Caco-2 (cell line): ENCODE measurements at regions of chr7 and their contacts with region 1.

Region 1: GRCh38 chr7:88344956-88345832 is 38.5 kb upstream of the STEAP4 start:
- DNase-seq: peak; percentile 57 to 68
- H3K4me3 ChIP-seq: no peak overlapping the region
- H3K4me3 Mint-ChIP-seq: no peak overlapping the region
- H3K27ac Mint-ChIP-seq: no peak overlapping the region
- H3K4me1 ChIP-seq: no peaks in the 10 kb centered on the region
- H3K4me1 Mint-ChIP-seq: no peaks in the 10 kb centered on the region
- H3K27me3 ChIP-seq: no peaks in the 10 kb centered on the region
- H3K27me3 Mint-ChIP-seq: peaks cover 4% of the 10 kb centered on the region
- CTCF ChIP-seq: peak; percentile 71 to 91

Region 2: DNA sequence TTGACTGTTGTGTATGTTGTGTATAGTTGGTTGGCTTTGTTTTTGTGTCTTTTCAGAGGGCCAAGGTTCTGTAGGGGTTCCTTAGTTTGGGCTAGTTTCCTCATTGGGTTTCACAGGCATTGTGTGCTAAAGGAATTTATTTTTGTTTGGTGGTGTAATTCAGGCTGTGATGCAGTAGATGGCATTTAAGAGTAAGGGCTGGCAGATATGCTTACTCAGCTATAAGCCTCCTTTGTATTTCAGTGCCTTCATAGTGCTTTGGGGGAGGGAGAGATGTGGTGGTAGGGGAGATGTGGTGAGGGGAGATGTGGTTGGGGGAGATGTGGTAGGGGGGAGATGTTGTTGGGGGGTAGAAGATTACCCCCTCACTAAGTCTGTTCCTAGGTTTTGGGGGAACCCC is 560.8 kb before region 1 on chr7:
- CTCF ChIA-PET with region 1: no interaction called
- POLR2A ChIA-PET with region 1: no interaction called
- intact Hi-C with region 1: loop called (anchors 10 kb)
- DNase-seq: no peak
- H3K4me3 ChIP-seq: no peak overlapping the region
- H3K4me3 Mint-ChIP-seq: no peak overlapping the region
- H3K27ac Mint-ChIP-seq: no peak overlapping the region
- H3K4me1 ChIP-seq: no peaks in the 10 kb centered on the region
- H3K4me1 Mint-ChIP-seq: no peaks in the 10 kb centered on the region
- H3K27me3 ChIP-seq: peaks cover 3% of the 10 kb centered on the region; the same call in 1 of the 2 replicates
- H3K27me3 Mint-ChIP-seq: peaks cover 15% of the 10 kb centered on the region
- CTCF ChIP-seq: no peak

Region 3: DNA sequence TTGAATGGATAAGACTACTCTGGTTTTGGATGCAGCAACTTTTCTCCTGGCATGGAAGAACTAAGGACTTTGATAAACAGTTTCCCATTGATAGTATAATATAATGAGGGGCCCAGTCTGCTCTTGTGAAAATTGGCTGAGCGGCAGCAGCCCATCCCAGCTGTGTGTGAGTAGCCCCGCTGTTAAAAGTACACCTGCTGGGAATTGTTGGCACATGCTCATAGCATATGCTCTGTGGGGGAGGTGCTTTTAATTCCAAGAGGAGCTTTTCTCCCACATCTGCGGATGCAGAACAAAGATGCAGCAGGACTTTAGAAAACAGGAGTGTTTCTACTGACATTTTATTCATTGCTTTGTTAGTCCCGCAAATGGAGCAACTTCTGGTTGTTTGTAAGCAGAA is 144.4 kb before region 1 on chr7:
- CTCF ChIA-PET with region 1: no interaction called
- POLR2A ChIA-PET with region 1: no interaction called
- intact Hi-C with region 1: no loop called
- DNase-seq: no peak
- H3K4me3 ChIP-seq: no peak overlapping the region
- H3K4me3 Mint-ChIP-seq: no peak overlapping the region
- H3K27ac Mint-ChIP-seq: no peak overlapping the region
- H3K4me1 ChIP-seq: no peaks in the 10 kb centered on the region
- H3K4me1 Mint-ChIP-seq: no peaks in the 10 kb centered on the region
- H3K27me3 ChIP-seq: no peaks in the 10 kb centered on the region
- H3K27me3 Mint-ChIP-seq: no peaks in the 10 kb centered on the region
- CTCF ChIP-seq: no peak

Region 4: GRCh38 chr7:88322151-88322550 is 23.0 kb before region 1 on chr7:
- CTCF ChIA-PET with region 1: no interaction called
- POLR2A ChIA-PET with region 1: no interaction called
- intact Hi-C with region 1: no loop called
- DNase-seq: no peak
- H3K4me3 ChIP-seq: no peak overlapping the region
- H3K4me3 Mint-ChIP-seq: no peak overlapping the region
- H3K27ac Mint-ChIP-seq: no peak overlapping the region
- H3K4me1 ChIP-seq: 0 out of 2 replicates have a peak, but pooled peaks cover 6% of the 10 kb centered on the region
- H3K4me1 Mint-ChIP-seq: no peaks in the 10 kb centered on the region
- H3K27me3 ChIP-seq: no peaks in the 10 kb centered on the region
- H3K27me3 Mint-ChIP-seq: peaks cover 3% of the 10 kb centered on the region
- CTCF ChIP-seq: no peak

Region 5: GRCh38 chr7:88357781-88358525 is 12.8 kb after region 1 on chr7:
- CTCF ChIA-PET with region 1: interaction called, 30 read pairs
- POLR2A ChIA-PET with region 1: no interaction called
- intact Hi-C with region 1: loop called (anchors 1 kb)
- DNase-seq: peak in 1 of 2 experiments; percentile 32
- H3K4me3 ChIP-seq: no peak overlapping the region
- H3K4me3 Mint-ChIP-seq: peak overlapping the region; percentile 15
- H3K27ac Mint-ChIP-seq: no peak overlapping the region
- H3K4me1 ChIP-seq: peaks cover 14% of the 10 kb centered on the region
- H3K4me1 Mint-ChIP-seq: peaks cover 11% of the 10 kb centered on the region
- H3K27me3 ChIP-seq: no peaks in the 10 kb centered on the region; the same call in 1 of the 2 replicates
- H3K27me3 Mint-ChIP-seq: peaks cover 5% of the 10 kb centered on the region
- CTCF ChIP-seq: peak; percentile 56 to 71

Region 6: DNA sequence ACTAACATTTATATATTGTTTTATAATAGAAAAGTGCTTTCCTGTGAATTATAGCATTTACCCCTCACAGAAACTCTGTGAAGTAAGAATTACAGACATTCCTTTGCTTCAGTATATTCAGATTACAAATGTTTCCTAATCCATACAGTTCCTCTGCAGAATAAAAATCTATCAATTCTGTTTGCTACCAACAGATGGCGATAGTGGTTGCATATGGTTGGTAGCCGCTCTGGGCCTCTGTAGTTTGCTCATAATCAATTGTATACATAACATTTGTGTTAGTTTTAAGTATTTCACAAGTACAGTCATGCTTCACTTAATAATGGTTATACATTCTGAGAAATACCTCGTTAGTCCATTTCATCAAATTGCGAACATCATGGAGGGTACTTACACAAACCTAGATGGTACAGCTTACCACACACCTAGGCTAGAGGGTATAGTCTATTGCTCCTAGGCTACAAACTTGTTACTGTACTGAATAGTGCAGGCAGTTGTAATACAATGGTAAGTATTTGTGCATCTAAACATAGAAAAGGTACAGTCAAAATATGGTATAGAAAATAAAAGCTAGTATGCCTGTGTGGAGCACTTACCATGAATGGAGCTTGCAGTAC is 55.9 kb after region 1 on chr7:
- CTCF ChIA-PET with region 1: no interaction called
- POLR2A ChIA-PET with region 1: no interaction called
- intact Hi-C with region 1: loop called (anchors 2 kb)
- DNase-seq: peak in 1 of 2 experiments; percentile 27
- H3K4me3 ChIP-seq: no peak overlapping the region
- H3K4me3 Mint-ChIP-seq: no peak overlapping the region
- H3K27ac Mint-ChIP-seq: no peak overlapping the region
- H3K4me1 ChIP-seq: no peaks in the 10 kb centered on the region
- H3K4me1 Mint-ChIP-seq: no peaks in the 10 kb centered on the region
- H3K27me3 ChIP-seq: no peaks in the 10 kb centered on the region
- H3K27me3 Mint-ChIP-seq: peaks cover 7% of the 10 kb centered on the region
- CTCF ChIP-seq: peak; percentile 47 to 70

Region 7: DNA sequence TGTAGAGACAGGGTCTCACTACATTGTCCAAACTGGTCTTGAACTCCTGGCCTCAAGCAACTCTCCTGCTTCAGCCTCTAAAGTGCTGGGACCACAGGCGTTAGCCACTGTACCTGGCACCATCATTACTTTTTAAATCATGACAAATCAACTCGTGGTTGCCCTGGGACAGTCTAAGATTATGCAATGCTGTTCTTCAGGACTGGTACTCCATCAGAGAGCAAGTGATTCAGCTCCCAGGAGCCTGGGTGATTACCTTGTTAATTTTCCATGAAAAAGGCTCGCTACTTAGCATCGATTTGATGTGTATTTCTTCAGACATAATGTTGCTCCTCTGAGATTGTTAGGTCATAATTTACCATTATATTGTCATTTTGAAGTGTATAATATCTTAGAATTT is 120.4 kb after region 1 on chr7:
- CTCF ChIA-PET with region 1: no interaction called
- POLR2A ChIA-PET with region 1: no interaction called
- intact Hi-C with region 1: no loop called
- DNase-seq: no peak
- H3K4me3 ChIP-seq: no peak overlapping the region
- H3K4me3 Mint-ChIP-seq: no peak overlapping the region
- H3K27ac Mint-ChIP-seq: no peak overlapping the region
- H3K4me1 ChIP-seq: no peaks in the 10 kb centered on the region
- H3K4me1 Mint-ChIP-seq: peaks cover 7% of the 10 kb centered on the region
- H3K27me3 ChIP-seq: no peaks in the 10 kb centered on the region
- H3K27me3 Mint-ChIP-seq: peaks cover 2% of the 10 kb centered on the region
- CTCF ChIP-seq: no peak

Region 8: GRCh38 chr7:88485821-88486220 is 140.6 kb after region 1 on chr7:
- CTCF ChIA-PET with region 1: no interaction called
- POLR2A ChIA-PET with region 1: no interaction called
- intact Hi-C with region 1: no loop called
- DNase-seq: no peak
- H3K4me3 ChIP-seq: no peak overlapping the region
- H3K4me3 Mint-ChIP-seq: no peak overlapping the region
- H3K27ac Mint-ChIP-seq: no peak overlapping the region
- H3K4me1 ChIP-seq: no peaks in the 10 kb centered on the region
- H3K4me1 Mint-ChIP-seq: no peaks in the 10 kb centered on the region
- H3K27me3 ChIP-seq: no peaks in the 10 kb centered on the region
- H3K27me3 Mint-ChIP-seq: peaks cover 10% of the 10 kb centered on the region
- CTCF ChIP-seq: no peak

Region 9: GRCh38 chr7:88835147-88835728 is 490.0 kb after region 1 on chr7:
- CTCF ChIA-PET with region 1: interaction called, 18 read pairs
- POLR2A ChIA-PET with region 1: no interaction called
- intact Hi-C with region 1: loop called (anchors 1 kb)
- DNase-seq: peak in 1 of 2 experiments; percentile 59
- H3K4me3 ChIP-seq: no peak overlapping the region
- H3K4me3 Mint-ChIP-seq: no peak overlapping the region
- H3K27ac Mint-ChIP-seq: no peak overlapping the region
- H3K4me1 ChIP-seq: no peaks in the 10 kb centered on the region
- H3K4me1 Mint-ChIP-seq: no peaks in the 10 kb centered on the region
- H3K27me3 ChIP-seq: no peaks in the 10 kb centered on the region
- H3K27me3 Mint-ChIP-seq: no peaks in the 10 kb centered on the region
- CTCF ChIP-seq: peak; percentile 53 to 55